ENCODE measurements at regions of chr10 and their contacts with region 1.

Region 1: GRCh38 chr10:9081253-9081652 is 1026.8 kb downstream of the GATA3 start:
- DNase-seq: no peak
- ATAC-seq: no peak
- H3K4me3 ChIP-seq: no peak overlapping the region
- H3K27ac ChIP-seq: no peak overlapping the region
- H3K4me1 ChIP-seq: no peaks in the 10 kb centered on the region
- H3K27me3 ChIP-seq: no peaks in the 10 kb centered on the region
- CTCF ChIP-seq: no peak
- POLR2A ChIP-seq: no peak

Region 2: DNA sequence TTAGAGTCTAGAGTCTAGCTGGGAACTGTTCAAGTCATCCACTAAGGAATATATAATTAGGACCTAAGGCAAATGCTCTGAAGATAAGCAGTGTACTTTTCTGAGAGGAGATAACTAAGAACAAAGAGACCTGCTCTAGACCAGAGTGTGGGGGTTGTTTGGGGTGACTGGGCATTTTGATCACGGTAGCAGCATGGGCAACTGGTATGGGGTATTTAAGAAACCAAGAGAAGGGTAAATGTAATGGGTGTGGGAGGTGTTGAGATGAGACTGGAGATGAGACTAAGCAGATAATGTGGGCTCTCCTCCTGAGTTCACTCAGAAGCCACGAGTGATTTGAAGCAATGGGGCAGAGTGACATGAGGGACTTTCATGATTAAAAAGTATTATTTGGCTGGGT is 56.1 kb after region 1 on chr10:
- intact Hi-C with region 1: loop called in 1 of 10 experiments (anchors 10 kb)
- DNase-seq: no peak
- ATAC-seq: no peak
- H3K4me3 ChIP-seq: no peak overlapping the region
- H3K27ac ChIP-seq: no peak overlapping the region
- H3K4me1 ChIP-seq: no peaks in the 10 kb centered on the region
- H3K27me3 ChIP-seq: no peaks in the 10 kb centered on the region
- CTCF ChIP-seq: no peak
- POLR2A ChIP-seq: no peak